Activated CD4-positive, alpha-beta T cell treated with anti-CD3 and anti-CD28 coated beads for 36 hours (primary cell): ENCODE measurements at regions of chr3 and their contacts with region 1.

Region 1: GRCh38 chr3:50611464-50612233 is at the start of gene CISH:
- DNase-seq: peak; percentile 99
- ATAC-seq: peak; percentile 68
- H3K4me3 Mint-ChIP-seq: peak within 1 kb of the TSS; percentile 96
- H3K27ac Mint-ChIP-seq: peak within 1 kb of the TSS; percentile 100
- H3K4me1 Mint-ChIP-seq: peaks cover 39% of the 10 kb centered on the region
- H3K27me3 Mint-ChIP-seq: no peaks in the 10 kb centered on the region
- total RNA-seq, gene CISH: 265 to 269 TPM

Region 2: DNA sequence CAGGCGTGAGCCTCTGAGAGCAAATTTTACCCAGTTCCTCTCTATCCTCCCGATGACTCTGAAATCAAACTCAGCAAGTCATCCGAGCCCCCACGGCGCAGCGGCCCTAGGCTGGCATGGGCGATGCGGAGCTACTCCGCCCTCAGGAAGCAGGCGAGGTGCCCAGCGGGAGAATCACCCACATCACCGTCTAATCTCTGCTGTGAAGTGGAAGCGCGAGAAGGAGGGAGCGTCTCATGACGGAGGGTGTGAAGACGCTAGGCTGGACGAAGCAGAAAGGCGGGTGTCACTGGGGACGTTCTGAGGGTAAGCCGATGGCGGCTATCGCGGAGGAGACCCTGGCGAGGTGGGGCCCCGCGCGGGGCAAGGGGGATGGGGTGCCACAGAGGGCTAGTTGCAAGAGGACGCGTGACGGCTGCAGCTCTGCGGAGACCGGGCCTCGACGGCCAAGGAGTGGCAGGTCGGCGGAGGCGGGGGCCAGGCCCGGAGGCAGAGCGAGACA is 384.7 kb before region 1 on chr3:
- CTCF ChIA-PET with region 1: no interaction called
- POLR2A ChIA-PET with region 1: no interaction called
- intact Hi-C with region 1: no loop called
- DNase-seq: peak; percentile 72
- ATAC-seq: peak; percentile 30
- H3K4me3 Mint-ChIP-seq: peak overlapping the region; percentile 79
- H3K27ac Mint-ChIP-seq: peak overlapping the region; percentile 88
- H3K4me1 Mint-ChIP-seq: peaks cover 22% of the 10 kb centered on the region
- H3K27me3 Mint-ChIP-seq: no peaks in the 10 kb centered on the region

Region 3: GRCh38 chr3:50298836-50299637 is 312.6 kb before region 1 on chr3 and contains the starts of genes HYAL3 and NAA80:
- CTCF ChIA-PET with region 1: no interaction called
- POLR2A ChIA-PET with region 1: no interaction called
- intact Hi-C with region 1: loop called (anchors 1 to 2 kb)
- DNase-seq: peak; percentile 100
- ATAC-seq: peak; percentile 89
- H3K4me3 Mint-ChIP-seq: peak within 1 kb of the TSS; percentile 97
- H3K27ac Mint-ChIP-seq: peak within 1 kb of the TSS; percentile 96
- H3K4me1 Mint-ChIP-seq: peaks cover 13% of the 10 kb centered on the region
- H3K27me3 Mint-ChIP-seq: no peaks in the 10 kb centered on the region
- total RNA-seq, gene HYAL3: 4.5 to 5.4 TPM
- total RNA-seq, gene NAA80: 17.6 to 18.7 TPM

Region 4: GRCh38 chr3:50436114-50436674 is 175.5 kb before region 1 on chr3:
- CTCF ChIA-PET with region 1: no interaction called
- POLR2A ChIA-PET with region 1: no interaction called
- intact Hi-C with region 1: loop called (anchors 1 to 5 kb)
- DNase-seq: peak; percentile 89
- ATAC-seq: peak; percentile 98
- H3K4me3 Mint-ChIP-seq: no peak overlapping the region
- H3K27ac Mint-ChIP-seq: no peak overlapping the region
- H3K4me1 Mint-ChIP-seq: no peaks in the 10 kb centered on the region
- H3K27me3 Mint-ChIP-seq: peaks cover 3% of the 10 kb centered on the region

Region 5: GRCh38 chr3:50509715-50510114 is 101.9 kb before region 1 on chr3:
- CTCF ChIA-PET with region 1: no interaction called
- POLR2A ChIA-PET with region 1: no interaction called
- intact Hi-C with region 1: no loop called
- DNase-seq: no peak
- ATAC-seq: no peak
- H3K4me3 Mint-ChIP-seq: no peak overlapping the region
- H3K27ac Mint-ChIP-seq: no peak overlapping the region
- H3K4me1 Mint-ChIP-seq: no peaks in the 10 kb centered on the region
- H3K27me3 Mint-ChIP-seq: no peaks in the 10 kb centered on the region

Region 6: DNA sequence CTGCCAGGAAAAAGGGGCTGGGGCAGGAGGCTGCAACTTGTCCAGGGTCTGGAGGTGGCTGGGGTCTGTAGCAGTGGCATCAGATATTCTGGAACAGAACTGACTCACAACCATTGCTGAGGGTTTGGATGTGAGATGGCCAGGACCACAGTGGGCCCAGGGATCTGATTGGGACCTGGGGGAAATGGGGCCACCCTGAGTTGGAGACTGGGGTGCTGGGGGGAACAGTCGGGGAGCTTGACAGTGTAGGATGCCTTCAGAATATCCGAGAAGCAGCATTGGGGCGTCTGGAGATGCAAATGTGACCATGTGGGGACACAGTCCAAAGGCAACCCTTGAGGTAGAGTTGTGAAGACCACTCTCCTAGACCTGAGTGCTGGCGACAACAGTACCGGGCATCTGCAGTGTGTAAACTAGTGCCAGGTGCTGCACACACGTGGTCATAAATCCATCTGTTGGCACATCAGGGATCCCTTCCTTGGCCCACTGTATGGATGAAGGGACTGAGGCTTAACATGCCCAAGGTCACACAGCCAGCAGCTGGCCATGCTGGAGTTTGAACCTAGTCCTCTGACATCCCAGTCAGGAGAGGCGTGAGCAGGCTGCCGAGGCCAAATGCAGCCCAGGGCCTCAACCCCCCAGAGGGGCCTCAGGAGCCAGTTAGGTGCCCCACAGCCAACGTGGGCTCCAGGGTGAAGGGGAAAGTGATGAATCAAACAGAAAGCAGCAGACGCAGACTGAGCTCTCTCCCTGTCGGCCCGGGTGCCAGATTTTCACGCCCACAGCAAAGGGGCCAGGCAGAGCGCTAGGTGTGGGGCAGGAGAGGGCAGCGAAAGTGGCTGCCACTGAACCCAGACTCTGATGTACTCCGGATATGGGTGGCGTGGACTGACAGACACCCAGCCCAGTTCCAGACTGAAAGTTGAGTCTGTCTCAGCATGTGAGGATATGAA is 23.6 kb before region 1 on chr3:
- CTCF ChIA-PET with region 1: interaction called, 647 read pairs
- POLR2A ChIA-PET with region 1: interaction called, 585 read pairs
- intact Hi-C with region 1: loop called (anchors 1 kb)
- DNase-seq: peak; percentile 94
- ATAC-seq: peak; percentile 49
- H3K4me3 Mint-ChIP-seq: peak overlapping the region; percentile 42
- H3K27ac Mint-ChIP-seq: peak overlapping the region; percentile 100
- H3K4me1 Mint-ChIP-seq: peaks cover 95% of the 10 kb centered on the region
- H3K27me3 Mint-ChIP-seq: no peaks in the 10 kb centered on the region

Region 7: GRCh38 chr3:50674349-50675178 is 62.9 kb after region 1 on chr3 and contains the start of gene DOCK3:
- CTCF ChIA-PET with region 1: interaction called, 24 read pairs
- POLR2A ChIA-PET with region 1: no interaction called
- intact Hi-C with region 1: loop called in 1 of 2 experiments (anchors 1 kb)
- DNase-seq: peak; percentile 79
- ATAC-seq: peak; percentile 91
- H3K4me3 Mint-ChIP-seq: peak within 1 kb of the TSS; percentile 69
- H3K27ac Mint-ChIP-seq: peak within 1 kb of the TSS; percentile 55
- H3K4me1 Mint-ChIP-seq: peaks cover 10% of the 10 kb centered on the region
- H3K27me3 Mint-ChIP-seq: peaks cover 36% of the 10 kb centered on the region
- total RNA-seq, gene DOCK3: 2.5 to 2.6 TPM

Region 8: DNA sequence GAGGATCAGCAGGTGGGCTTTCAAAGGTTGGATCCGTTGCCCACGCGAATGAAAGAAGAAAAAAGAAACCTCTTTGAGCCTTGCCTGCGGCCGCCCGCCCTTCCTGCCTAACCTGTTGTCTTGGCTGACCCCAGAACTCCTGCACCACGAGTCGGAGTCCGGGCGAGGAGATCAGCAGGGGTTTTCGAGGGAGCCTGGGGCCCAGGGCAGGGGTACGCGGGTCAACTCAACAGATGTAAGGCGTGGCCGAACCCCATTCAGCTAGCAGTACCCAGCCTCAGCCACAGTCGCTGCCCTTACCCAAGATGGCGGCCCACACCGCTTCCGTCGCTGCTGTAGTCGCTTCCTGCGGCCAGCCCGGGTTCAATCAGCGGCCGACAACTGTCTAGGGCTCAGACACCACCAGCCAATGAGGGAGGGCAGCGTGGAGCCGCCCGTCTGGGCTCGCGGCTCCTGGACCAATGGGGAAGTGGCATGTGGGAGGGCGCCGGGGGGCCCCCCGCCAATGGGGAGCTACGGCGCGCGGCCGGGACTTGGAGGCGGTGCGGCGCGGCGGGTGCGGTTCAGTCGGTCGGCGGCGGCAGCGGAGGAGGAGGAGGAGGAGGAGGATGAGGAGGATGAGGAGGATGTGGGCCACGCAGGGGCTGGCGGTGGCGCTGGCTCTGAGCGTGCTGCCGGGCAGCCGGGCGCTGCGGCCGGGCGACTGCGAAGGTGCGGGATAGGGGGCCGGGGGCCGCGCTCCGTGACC is 773.3 kb after region 1 on chr3 and contains the start of gene MANF:
- CTCF ChIA-PET with region 1: interaction called, 10 read pairs
- POLR2A ChIA-PET with region 1: no interaction called
- intact Hi-C with region 1: loop called (anchors 1 to 2 kb)
- DNase-seq: peak; percentile 99
- ATAC-seq: peak; percentile 97
- H3K4me3 Mint-ChIP-seq: peak within 1 kb of the TSS; percentile 93
- H3K27ac Mint-ChIP-seq: peak within 1 kb of the TSS; percentile 99
- H3K4me1 Mint-ChIP-seq: peaks cover 46% of the 10 kb centered on the region
- H3K27me3 Mint-ChIP-seq: no peaks in the 10 kb centered on the region
- total RNA-seq, gene MANF: 124 to 129 TPM

Region 9: GRCh38 chr3:51941798-51942602 is 1330.4 kb after region 1 on chr3 and contains the starts of genes PARP3 and RRP9:
- CTCF ChIA-PET with region 1: no interaction called
- POLR2A ChIA-PET with region 1: no interaction called
- intact Hi-C with region 1: loop called in 1 of 2 experiments (anchors 10 kb)
- DNase-seq: peak; percentile 100
- ATAC-seq: peak; percentile 95
- H3K4me3 Mint-ChIP-seq: peak within 1 kb of the TSS; percentile 84
- H3K27ac Mint-ChIP-seq: peak within 1 kb of the TSS; percentile 83
- H3K4me1 Mint-ChIP-seq: peaks cover 33% of the 10 kb centered on the region
- H3K27me3 Mint-ChIP-seq: no peaks in the 10 kb centered on the region
- total RNA-seq, gene PARP3: 10.6 to 12.2 TPM
- total RNA-seq, gene RRP9: 38.2 to 39.3 TPM